ENCODE measurements at regions of chr12 and their contacts with region 1.

Region 1: GRCh38 chr12:56628671-56629458 is 1.3 kb downstream of the BAZ2A start:
- DNase-seq: no peak
- H3K4me3 ChIP-seq: peak overlapping the region; percentile 80 to 99 (median 97)
- H3K27ac ChIP-seq: peak overlapping the region; percentile 88 to 98 (median 94)
- H3K4me1 ChIP-seq: peaks cover 71 to 83% (median 82%) of the 10 kb centered on the region in 4 donors
- H3K27me3 ChIP-seq: no peaks in the 10 kb centered on the region
- CTCF ChIP-seq: peak in 1 of 3 experiments; percentile 7
- EP300 ChIP-seq: no peak
- POLR2A ChIP-seq: no peak

Region 2: GRCh38 chr12:56521590-56522371 is 107.1 kb before region 1 on chr12 and contains the start of gene RBMS2:
- intact Hi-C with region 1: loop called (anchors 2 kb)
- DNase-seq: no peak
- H3K4me3 ChIP-seq: peak within 1 kb of the TSS; percentile 51 to 68 (median 62)
- H3K27ac ChIP-seq: peak within 1 kb of the TSS; percentile 85 to 92 (median 86)
- H3K4me1 ChIP-seq: peaks cover 20 to 65% (median 54%) of the 10 kb centered on the region in 4 donors
- H3K27me3 ChIP-seq: no peaks in the 10 kb centered on the region
- CTCF ChIP-seq: peak in 1 of 3 experiments; percentile 11
- EP300 ChIP-seq: no peak
- POLR2A ChIP-seq: no peak
- total RNA-seq, gene RBMS2: 31.6 to 49.4 (median 40.4) TPM

Region 3: DNA sequence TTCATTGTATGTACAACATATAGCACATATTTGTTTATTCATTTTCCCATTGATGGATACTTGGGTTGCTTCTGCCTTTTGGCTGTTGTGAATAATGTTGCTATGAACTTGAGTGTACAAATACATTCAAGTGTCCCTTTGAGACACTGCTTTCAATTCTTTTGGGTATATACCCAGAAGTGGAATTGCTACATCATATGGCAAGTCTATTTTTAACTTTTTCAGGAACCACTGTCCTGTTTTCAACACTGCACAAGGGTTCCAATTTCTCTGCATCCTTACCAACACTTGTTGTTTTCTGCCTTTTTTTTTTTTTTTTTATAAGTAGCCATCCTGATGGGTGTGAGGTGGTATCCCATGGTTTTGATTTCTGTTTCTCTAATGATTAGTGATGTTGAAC is 91.3 kb before region 1 on chr12:
- intact Hi-C with region 1: no loop called
- DNase-seq: no peak
- H3K4me3 ChIP-seq: no peak overlapping the region
- H3K27ac ChIP-seq: no peak overlapping the region
- H3K4me1 ChIP-seq: peaks cover 7 to 24% (median 20%) of the 10 kb centered on the region in 4 donors
- H3K27me3 ChIP-seq: no peaks in the 10 kb centered on the region
- CTCF ChIP-seq: no peak
- EP300 ChIP-seq: no peak
- POLR2A ChIP-seq: no peak

Region 4: DNA sequence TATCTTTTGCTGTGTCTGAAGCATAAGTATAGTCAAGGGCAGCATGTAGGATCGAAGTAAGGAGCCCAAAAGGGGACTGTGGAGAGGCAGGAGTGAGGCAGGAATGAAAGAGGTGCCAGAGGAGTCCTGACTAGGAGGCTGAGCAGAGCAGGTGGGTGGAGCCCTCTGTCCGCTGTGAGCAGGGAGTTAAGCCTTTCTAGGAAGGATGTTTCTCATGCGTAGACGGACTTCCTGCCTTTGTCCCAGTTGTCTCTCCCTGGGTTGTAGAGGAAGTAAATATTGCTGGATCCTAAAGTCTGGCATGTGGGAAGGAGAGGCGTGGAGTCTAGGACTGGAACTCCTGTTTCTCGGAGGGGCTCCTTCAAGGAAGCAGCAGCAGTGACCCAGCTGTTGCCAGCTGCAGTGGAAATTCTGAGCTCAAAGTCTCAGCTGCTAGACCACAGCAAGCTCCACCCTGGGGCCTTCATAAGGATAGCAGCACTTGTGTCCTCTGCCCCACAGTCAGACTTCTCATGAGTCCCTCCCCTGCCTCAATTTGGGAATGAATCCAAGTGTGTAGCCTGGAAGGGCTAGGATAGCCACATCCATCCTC is 63.3 kb before region 1 on chr12:
- intact Hi-C with region 1: no loop called
- DNase-seq: no peak
- H3K4me3 ChIP-seq: peak overlapping the region in 3 of 4 donors; percentile 8 to 24 (median 17)
- H3K27ac ChIP-seq: peak overlapping the region; percentile 72 to 83 (median 76)
- H3K4me1 ChIP-seq: peaks cover 44 to 48% (median 46%) of the 10 kb centered on the region in 4 donors
- H3K27me3 ChIP-seq: no peaks in the 10 kb centered on the region
- CTCF ChIP-seq: no peak
- EP300 ChIP-seq: peak; percentile 40
- POLR2A ChIP-seq: no peak

Measured in esophagus muscularis mucosa (tissue), 4 donors.